ENCODE measurements at regions of chr13 and their contacts with region 1.

Region 1: DNA sequence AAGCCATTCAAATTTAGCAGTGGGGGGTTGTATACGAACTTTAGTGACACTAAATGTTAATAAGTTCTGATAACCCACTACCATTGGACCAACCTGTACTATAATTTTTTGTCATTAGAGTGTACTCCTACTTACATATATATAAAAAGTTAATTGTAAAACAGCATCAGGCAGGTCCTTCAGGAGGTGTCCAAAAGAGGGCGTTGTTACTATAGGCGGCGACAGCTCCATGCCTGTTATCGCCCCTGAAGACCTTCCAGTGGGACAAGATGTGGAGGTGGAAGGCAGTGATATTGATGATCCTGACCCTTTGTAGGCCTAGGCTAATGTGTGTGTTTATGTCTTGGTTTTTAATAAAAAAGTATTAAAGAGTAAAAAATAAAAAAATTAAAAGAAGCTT is 27.5 kb downstream of the SPRYD7 start:
- DNase-seq: peak; percentile 11
- H3K4me3 ChIP-seq: no peak overlapping the region
- H3K27ac ChIP-seq: no peak overlapping the region
- H3K4me1 ChIP-seq: no peaks in the 10 kb centered on the region
- H3K27me3 ChIP-seq: no peaks in the 10 kb centered on the region
- CTCF ChIP-seq: peak; percentile 50

Region 2: DNA sequence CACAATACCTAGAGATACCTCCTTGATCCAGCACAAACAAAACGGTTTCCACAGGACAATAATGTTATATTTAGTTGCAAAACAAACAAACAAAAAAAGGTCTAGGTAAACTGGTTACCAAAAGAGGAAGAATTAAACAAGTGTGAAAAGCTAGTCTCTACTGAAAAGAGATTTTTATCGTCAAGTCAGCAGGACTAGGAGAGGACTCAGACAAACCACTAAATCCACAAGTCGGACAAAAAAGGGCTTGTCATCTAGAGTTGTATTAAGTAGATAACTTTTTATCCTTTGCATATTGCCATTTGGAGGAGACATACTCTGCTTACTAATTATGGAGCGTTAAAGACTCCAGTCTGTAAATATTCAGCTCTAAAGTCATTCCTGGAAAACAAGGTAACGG is 106.2 kb before region 1 on chr13:
- CTCF ChIA-PET with region 1: no interaction called
- POLR2A ChIA-PET with region 1: interaction called, 10 read pairs
- intact Hi-C with region 1: no loop called
- DNase-seq: no peak
- H3K4me3 ChIP-seq: no peak overlapping the region
- H3K27ac ChIP-seq: no peak overlapping the region
- H3K4me1 ChIP-seq: no peaks in the 10 kb centered on the region
- H3K27me3 ChIP-seq: no peaks in the 10 kb centered on the region
- CTCF ChIP-seq: no peak

Region 3: GRCh38 chr13:49858183-49858856 is 50.3 kb before region 1 on chr13:
- CTCF ChIA-PET with region 1: no interaction called
- POLR2A ChIA-PET with region 1: no interaction called
- intact Hi-C with region 1: no loop called
- DNase-seq: no peak
- H3K4me3 ChIP-seq: no peak overlapping the region
- H3K27ac ChIP-seq: no peak overlapping the region
- H3K4me1 ChIP-seq: no peaks in the 10 kb centered on the region
- H3K27me3 ChIP-seq: no peaks in the 10 kb centered on the region
- CTCF ChIP-seq: no peak

Measured in A673 (cell line).